ENCODE measurements at regions of chr5 and their contacts with region 1.

Region 1: DNA sequence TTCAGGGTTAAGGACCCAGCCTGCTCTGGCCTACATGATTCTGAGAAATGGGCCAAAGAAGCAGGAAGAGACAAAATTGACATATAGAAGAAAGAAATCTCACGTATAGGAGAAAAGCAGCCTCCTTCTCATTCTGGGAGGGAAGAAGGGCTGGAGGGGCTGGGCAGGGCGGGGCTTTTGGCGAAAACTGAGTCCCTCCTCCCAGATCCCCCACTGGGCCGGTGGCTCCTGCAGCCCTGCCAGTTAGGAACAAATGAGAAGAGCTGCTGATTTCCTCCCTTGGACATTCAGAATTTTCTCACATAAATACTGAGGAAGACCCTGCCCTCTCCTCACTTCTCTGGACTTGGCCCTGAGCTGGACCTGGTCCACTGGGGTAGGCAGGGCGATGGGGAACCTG is at the start of gene WNT8A:
- DNase-seq: no peak
- ATAC-seq: no peak
- H3K4me3 ChIP-seq: no peak within 1 kb of the TSS
- H3K4me3 Mint-ChIP-seq: no peak within 1 kb of the TSS
- H3K27ac ChIP-seq: no peak within 1 kb of the TSS
- H3K27ac Mint-ChIP-seq: no peak within 1 kb of the TSS
- H3K4me1 ChIP-seq: peaks cover 3 to 15% of the 10 kb centered on the region in 2 donors
- H3K4me1 Mint-ChIP-seq: peaks cover 10% of the 10 kb centered on the region
- H3K27me3 ChIP-seq: no peaks in the 10 kb centered on the region
- H3K27me3 Mint-ChIP-seq: no peaks in the 10 kb centered on the region
- CTCF ChIP-seq: no peak
- total RNA-seq, gene WNT8A: not detected in 2 replicates

Region 2: GRCh38 chr5:138011991-138012390 is 71.7 kb before region 1 on chr5:
- CTCF ChIA-PET with region 1: no interaction called
- POLR2A ChIA-PET with region 1: no interaction called
- intact Hi-C with region 1: no loop called
- DNase-seq: no peak
- ATAC-seq: no peak
- H3K4me3 ChIP-seq: no peak overlapping the region
- H3K4me3 Mint-ChIP-seq: no peak overlapping the region
- H3K27ac ChIP-seq: no peak overlapping the region
- H3K27ac Mint-ChIP-seq: no peak overlapping the region
- H3K4me1 ChIP-seq: no peaks in the 10 kb centered on the region
- H3K4me1 Mint-ChIP-seq: peaks cover 5% of the 10 kb centered on the region
- H3K27me3 ChIP-seq: no peaks in the 10 kb centered on the region
- H3K27me3 Mint-ChIP-seq: no peaks in the 10 kb centered on the region
- CTCF ChIP-seq: no peak

Region 3: DNA sequence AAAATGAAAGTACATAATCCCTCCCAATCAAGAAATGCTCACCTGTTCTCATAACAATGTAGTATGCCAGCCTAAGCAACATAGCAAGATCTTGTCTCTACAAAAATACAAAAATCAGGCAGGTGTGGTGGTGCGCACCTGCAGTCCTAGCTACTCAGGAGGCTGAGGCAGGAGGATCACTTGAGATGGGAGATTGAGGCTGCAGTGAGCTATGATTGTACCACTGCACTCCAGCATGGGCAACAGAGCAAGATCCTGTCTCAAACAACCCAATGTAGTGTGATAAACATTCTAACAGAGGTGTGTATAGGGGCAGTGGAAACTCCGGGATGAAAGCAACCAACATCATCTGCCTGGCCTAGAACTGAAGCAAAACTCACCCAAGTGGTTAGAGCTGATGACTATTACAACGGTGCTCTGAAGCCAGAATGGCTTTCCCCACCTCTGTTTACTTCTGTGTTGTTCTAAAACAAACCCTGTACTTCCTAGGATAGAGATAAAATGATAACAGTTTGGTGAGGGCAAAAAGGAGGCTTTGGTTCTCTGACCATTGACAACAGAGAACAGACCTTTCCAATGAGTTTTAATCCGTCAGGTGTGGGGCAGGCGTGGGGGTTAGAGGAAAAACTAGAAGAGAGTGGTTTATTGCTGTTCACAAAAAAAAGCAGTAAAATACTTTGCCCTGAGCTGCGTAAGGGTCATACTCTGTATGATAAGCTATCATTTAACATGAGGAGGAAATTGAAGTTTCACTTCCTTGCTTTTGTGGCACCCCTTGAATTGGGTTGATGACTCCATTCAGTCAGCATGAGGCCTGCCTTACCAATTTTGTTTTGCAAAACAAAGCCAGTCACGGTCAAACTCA is 19.0 kb after region 1 on chr5:
- CTCF ChIA-PET with region 1: interaction called, 3 read pairs
- POLR2A ChIA-PET with region 1: no interaction called
- intact Hi-C with region 1: loop called (anchors 2 kb)
- DNase-seq: peak; percentile 69
- ATAC-seq: peak; percentile 95
- H3K4me3 ChIP-seq: no peak overlapping the region
- H3K4me3 Mint-ChIP-seq: peak overlapping the region; percentile 65
- H3K27ac ChIP-seq: peak overlapping the region in 1 of 2 donors; percentile 32
- H3K27ac Mint-ChIP-seq: peak overlapping the region; percentile 70
- H3K4me1 ChIP-seq: peaks cover 13 to 16% of the 10 kb centered on the region in 2 donors
- H3K4me1 Mint-ChIP-seq: peaks cover 24% of the 10 kb centered on the region
- H3K27me3 ChIP-seq: no peaks in the 10 kb centered on the region
- H3K27me3 Mint-ChIP-seq: peaks cover 13% of the 10 kb centered on the region
- CTCF ChIP-seq: no peak

Measured in B cell (primary cell).